ENCODE measurements at regions of chr9 and their contacts with region 1.

Region 1: GRCh38 chr9:122092611-122093506 is at the start of gene TTLL11:
- DNase-seq: peak; percentile 92 to 99
- H3K4me3 ChIP-seq: peak within 1 kb of the TSS; percentile 92
- H3K27ac ChIP-seq: peak within 1 kb of the TSS; percentile 82 to 92
- H3K4me1 ChIP-seq: peaks cover 5 to 31% of the 10 kb centered on the region in 2 donors
- H3K27me3 ChIP-seq: no peaks in the 10 kb centered on the region
- CTCF ChIP-seq: no peak
- total RNA-seq, gene TTLL11: 18.5 TPM

Region 2: DNA sequence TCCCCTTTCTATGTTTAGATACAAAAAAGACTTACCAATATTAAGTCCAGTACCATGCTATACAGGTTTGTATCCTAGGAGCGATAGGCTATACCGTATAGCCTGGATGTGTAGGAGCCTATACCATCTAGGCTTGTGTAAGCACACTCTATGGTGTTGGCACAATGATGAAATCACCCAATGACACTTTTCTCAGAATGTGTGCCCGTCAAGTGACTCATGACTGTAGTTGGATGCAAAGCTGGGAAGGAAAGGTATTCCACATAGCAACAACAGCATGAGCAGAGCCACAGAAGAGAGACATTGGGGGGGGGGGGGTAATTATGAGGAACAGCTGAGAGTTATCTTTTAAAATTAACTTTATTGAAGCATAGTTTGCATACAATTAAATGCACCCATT is 63.0 kb before region 1 on chr9:
- intact Hi-C with region 1: loop called (anchors 5 kb)
- DNase-seq: no peak
- H3K4me3 ChIP-seq: no peak overlapping the region
- H3K27ac ChIP-seq: no peak overlapping the region
- H3K4me1 ChIP-seq: peaks cover 0 to 20% of the 10 kb centered on the region in 2 donors
- H3K27me3 ChIP-seq: no peaks in the 10 kb centered on the region
- CTCF ChIP-seq: no peak

Region 3: DNA sequence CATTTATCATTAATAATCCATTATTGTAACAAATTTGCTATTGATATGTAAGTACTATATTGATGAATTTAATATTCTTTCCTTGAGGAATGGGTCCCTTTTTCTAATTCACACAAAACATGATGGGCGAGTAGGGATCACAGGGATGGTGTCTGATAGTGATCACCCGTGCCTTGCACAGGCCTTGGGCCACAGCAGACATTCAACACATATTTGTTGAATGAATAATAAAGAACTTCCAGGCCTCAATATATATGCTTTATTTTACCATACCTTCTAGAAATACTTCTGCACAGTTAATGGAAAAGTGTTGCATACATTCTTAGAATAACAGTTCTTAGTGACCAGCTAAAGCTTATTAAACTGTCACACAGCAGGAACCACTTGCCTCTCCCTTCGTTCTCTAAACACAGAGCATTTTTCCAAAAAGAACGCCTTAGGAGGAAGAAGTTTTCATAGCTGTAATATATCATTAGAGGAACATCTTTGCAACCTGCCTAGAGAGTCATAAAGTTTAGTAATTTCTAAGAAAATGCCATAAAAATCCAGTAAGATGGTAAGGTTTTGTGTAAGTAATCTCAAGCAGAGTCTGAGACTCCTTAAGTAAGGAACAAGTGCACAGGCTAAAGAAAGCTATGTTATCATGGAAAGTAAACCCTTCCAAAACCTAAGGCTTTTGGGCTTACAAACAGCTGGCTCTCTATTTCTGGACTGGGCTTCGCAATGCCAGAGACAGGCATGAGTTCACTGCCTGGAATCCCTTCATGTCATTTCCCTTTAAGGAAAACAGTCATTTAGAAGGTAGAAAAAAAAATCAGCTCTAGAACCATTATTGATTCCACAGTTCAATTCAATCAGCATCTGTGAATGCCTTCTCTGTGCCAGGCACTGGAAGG is 17.5 kb before region 1 on chr9:
- intact Hi-C with region 1: loop called (anchors 1 kb)
- DNase-seq: peak in 1 of 2 donors; percentile 82
- H3K4me3 ChIP-seq: peak overlapping the region in 1 of 2 donors; percentile 50
- H3K27ac ChIP-seq: peak overlapping the region; percentile 91 to 97
- H3K4me1 ChIP-seq: peaks cover 10 to 35% of the 10 kb centered on the region in 2 donors
- H3K27me3 ChIP-seq: no peaks in the 10 kb centered on the region
- CTCF ChIP-seq: no peak

Region 4: DNA sequence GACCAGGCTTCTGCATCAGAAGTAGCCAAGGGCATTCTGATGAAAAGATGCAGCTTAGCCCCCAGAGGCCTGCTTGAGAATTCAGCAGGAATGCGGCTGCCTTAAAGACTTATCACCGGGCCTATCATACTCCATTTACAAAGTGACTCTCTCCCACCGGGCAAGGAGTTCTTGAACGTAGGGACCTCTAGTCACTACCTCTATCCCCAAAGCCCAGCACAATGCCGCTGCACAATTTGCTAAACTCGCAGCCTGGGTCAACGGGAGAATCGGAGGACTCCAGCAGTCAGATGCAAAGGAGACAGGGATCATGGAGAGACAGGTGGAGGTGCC is 734.9 kb after region 1 on chr9:
- intact Hi-C with region 1: loop called (anchors 10 kb)
- DNase-seq: no peak
- H3K4me3 ChIP-seq: peak overlapping the region; percentile 64 to 92
- H3K27ac ChIP-seq: peak overlapping the region; percentile 93 to 98
- H3K4me1 ChIP-seq: peaks cover 3 to 15% of the 10 kb centered on the region in 2 donors
- H3K27me3 ChIP-seq: no peaks in the 10 kb centered on the region
- CTCF ChIP-seq: no peak

Measured in ascending aorta (tissue), 2 donors.